HAP-1 (cell line): ENCODE measurements at regions of chr3 and their contacts with region 1.

Region 1: GRCh38 chr3:71710906-71711494 is 14.2 kb downstream of the EIF4E3 start:
- DNase-seq: peak in 1 of 2 experiments; percentile 73
- H3K4me3 ChIP-seq: no peak overlapping the region
- H3K4me1 ChIP-seq: no peaks in the 10 kb centered on the region
- H3K27me3 ChIP-seq: no peaks in the 10 kb centered on the region

Region 2: GRCh38 chr3:71050538-71051258 is 660.3 kb before region 1 on chr3:
- in situ Hi-C with region 1: no loop called
- DNase-seq: peak; percentile 76 to 93
- H3K4me3 ChIP-seq: no peak overlapping the region
- H3K4me1 ChIP-seq: peaks cover 71% of the 10 kb centered on the region
- H3K27me3 ChIP-seq: no peaks in the 10 kb centered on the region

Region 3: DNA sequence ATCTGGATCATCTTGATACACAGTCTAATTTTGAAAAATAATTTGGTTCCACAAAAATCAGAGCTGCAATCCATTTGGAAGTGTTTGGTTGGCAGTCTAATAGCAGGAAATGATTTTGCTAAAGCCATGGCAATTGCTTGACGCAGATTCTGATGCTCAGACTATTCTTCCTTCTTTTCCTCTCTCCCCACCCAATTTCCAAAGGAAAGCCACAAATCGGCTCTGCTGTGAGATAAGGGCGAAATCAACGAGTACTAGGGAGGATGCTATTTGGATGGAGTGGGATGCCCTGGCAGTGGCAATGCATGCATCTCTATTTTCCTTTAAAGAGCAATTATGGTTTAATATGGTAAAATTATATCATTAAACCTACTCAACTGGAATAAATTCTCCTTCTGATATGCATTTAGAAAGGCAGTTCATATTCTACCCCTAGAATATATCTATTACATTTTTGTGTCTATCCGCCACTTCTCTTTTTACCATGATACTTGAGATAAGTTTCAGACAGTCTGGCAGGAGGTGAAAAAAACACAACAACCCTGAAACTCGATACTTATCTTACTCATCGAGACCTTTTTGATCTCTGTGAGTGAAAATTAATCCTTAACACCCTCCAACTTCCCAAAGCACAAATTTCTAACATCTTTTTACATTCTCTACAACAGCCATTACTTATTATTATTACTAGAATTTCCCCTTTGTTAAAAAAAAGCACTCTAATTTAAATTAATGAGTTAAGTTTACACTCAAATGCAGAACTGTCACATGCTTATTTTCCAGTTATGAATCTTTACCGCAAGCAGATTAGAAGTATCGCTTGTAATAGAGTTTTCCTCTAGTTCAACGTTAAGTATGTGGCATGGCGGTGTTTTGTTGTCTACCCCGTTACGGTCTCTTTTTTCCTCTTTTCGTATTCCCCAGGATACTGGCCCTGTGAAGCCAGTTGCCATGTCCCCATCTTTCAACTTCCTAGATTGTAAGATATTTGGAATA is 560.7 kb before region 1 on chr3:
- in situ Hi-C with region 1: no loop called
- DNase-seq: no peak
- H3K4me3 ChIP-seq: no peak overlapping the region
- H3K4me1 ChIP-seq: 0 out of 2 replicates have a peak, but pooled peaks cover 2% of the 10 kb centered on the region
- H3K27me3 ChIP-seq: no peaks in the 10 kb centered on the region

Region 4: GRCh38 chr3:71893122-71893521 is 182.1 kb after region 1 on chr3:
- in situ Hi-C with region 1: no loop called
- DNase-seq: no peak
- H3K4me3 ChIP-seq: no peak overlapping the region
- H3K4me1 ChIP-seq: no peaks in the 10 kb centered on the region
- H3K27me3 ChIP-seq: peaks cover 4% of the 10 kb centered on the region; the same call in 1 of the 2 replicates

Region 5: DNA sequence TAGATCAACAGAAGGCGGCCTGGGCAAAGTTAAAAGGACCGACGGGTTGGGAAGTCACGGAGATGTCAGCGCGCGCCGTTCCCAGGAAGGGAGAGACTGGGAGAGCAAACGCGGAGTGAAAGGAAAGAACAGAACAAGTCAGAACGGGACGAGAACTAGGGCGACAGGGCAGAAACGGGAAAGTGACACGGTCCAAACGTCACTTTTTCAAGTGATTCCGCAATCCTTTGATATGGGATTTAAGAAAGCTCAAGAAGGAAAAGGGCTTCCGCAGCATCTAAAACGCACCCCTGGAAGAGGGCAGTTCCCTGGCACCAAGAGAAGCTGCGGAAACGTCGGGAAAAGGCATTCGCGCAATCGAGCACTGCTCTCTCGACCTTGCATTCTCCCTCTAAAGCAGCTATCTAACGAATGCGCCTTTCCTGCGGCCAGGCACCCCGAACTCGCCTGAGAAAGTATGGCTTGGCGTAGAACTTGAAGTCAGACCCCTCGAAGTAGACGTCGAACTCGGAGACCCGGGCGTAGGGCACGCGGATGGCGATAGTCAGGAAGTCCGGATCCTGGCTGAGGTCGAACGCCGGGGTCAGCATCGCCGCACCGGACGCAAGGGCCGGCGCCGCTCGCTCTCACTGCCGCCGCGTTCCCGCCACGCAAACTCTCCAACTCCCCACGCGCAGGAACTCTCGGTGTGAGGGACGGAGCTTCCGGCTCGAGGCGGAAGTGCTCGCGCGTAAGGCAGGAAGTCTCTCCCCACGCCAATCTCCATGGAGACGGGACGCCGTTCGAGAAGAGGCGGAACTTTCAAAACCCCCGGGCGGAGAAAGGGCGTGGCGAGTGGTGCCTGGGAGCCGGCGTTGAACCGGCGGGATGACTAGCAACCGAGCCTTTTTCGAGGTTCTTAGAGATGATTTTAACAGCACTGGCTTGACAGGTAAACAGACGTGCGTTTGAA is 1137.0 kb after region 1 on chr3 and contains the start of gene SHQ1:
- in situ Hi-C with region 1: loop called (anchors 25 kb)
- DNase-seq: peak; percentile 81 to 98
- H3K4me3 ChIP-seq: peak within 1 kb of the TSS; percentile 84
- H3K4me1 ChIP-seq: peaks cover 25% of the 10 kb centered on the region
- H3K27me3 ChIP-seq: 0 out of 2 replicates have a peak, but pooled peaks cover 3% of the 10 kb centered on the region

Region 6: GRCh38 chr3:73086071-73086494 is 1375.1 kb after region 1 on chr3:
- in situ Hi-C with region 1: loop called (anchors 25 kb)
- DNase-seq: peak; percentile 67 to 72
- H3K4me3 ChIP-seq: no peak overlapping the region
- H3K4me1 ChIP-seq: no peaks in the 10 kb centered on the region
- H3K27me3 ChIP-seq: no peaks in the 10 kb centered on the region